Sigmoid colon (tissue), 7 donors: ENCODE measurements at regions of chr6 and their contacts with region 1.

Region 1: DNA sequence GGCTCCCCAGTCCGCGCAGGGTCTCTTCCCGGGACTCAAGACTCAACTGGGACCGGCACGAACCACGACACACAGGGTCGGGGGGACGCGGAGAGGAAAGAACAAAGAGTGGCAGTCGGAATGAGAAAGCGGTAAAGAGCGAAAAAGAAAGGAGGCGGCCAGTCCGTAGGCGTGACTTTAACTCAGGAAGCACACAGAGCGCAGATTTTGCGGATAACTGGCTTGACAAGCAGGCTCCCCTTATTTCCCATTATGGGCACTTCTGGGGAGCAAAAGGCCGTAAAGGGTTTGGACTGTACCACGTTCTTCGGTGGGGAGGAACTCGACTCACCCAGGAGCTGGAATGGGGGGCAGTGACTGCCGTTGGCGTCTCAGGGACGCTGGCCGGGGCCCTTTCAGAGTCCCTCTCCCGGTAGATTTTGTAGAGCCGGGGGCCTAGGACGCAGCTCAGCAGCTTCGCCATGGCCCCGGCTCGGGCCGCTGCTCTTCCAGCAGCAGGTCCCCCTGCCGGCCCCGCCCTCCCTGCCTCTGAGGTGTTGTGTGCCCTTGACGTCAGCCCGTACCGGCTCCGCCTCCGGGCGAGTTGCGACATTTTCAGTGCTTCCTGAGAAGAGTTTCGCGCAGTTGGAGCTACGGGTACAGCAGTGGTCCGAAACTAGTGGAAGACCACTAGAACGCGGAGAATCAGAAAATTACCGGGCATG is at the start of gene ABHD16A:
- DNase-seq: peak; percentile 100
- H3K4me3 ChIP-seq: peak within 1 kb of the TSS; percentile 66 to 92 (median 80)
- H3K27ac ChIP-seq: peak within 1 kb of the TSS; percentile 94 to 99 (median 97)
- H3K4me1 ChIP-seq: peaks cover 0 to 36% (median 22%) of the 10 kb centered on the region in 4 donors
- H3K27me3 ChIP-seq: no peaks in the 10 kb centered on the region
- CTCF ChIP-seq: no peak
- EP300 ChIP-seq: peak in 2 of 4 donors; percentile 66 to 82
- POLR2A ChIP-seq: peak; percentile 99
- total RNA-seq, gene ABHD16A: 37.8 to 63.4 (median 51.6) TPM

Region 2: GRCh38 chr6:31729515-31729978 is 26.6 kb after region 1 on chr6:
- intact Hi-C with region 1: loop called (anchors 1 kb)
- DNase-seq: peak; percentile 97
- H3K4me3 ChIP-seq: peak overlapping the region; percentile 78 to 95 (median 84)
- H3K27ac ChIP-seq: peak overlapping the region; percentile 96 to 99 (median 98)
- H3K4me1 ChIP-seq: peaks cover 0 to 39% (median 33%) of the 10 kb centered on the region in 4 donors
- H3K27me3 ChIP-seq: no peaks in the 10 kb centered on the region
- CTCF ChIP-seq: peak in 1 of 4 experiments; percentile 25
- EP300 ChIP-seq: no peak
- POLR2A ChIP-seq: peak; percentile 23 to 29

Region 3: DNA sequence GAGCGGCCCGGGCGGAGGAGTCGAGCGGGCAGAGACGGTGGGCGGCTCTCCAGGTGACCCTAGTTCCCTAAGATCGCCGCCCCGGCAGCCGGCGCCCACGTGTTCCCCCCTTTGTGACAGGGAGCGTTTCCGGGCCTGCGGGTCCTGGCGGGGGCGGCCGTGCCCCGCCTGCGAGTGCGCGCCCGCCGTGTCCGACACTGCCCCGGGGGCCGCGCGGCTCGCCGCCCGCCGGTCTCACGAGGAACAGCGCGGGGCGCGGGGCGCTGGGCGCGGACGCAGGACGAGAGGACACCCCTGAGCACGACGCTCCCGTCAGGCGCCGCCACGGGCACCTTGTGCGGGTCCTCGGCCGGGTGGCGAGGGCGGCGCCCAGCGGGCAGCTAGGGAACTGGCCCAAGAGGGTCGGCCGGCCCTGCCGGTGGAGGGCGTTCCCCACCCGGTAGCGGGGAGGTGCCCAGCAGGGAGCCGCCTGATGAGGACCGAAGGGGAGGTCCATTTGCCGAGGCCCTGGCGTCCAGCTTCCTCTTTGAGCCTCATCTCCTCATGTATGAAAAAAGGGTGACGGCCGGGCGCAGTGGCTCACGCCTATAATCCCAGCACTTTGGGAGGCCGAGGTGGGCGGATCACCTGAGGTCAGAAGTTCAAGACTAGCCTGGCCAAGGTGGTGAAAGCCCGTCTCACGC is 92.8 kb after region 1 on chr6 and contains the start of gene VARS1:
- intact Hi-C with region 1: loop called (anchors 5 kb)
- DNase-seq: peak; percentile 96
- H3K4me3 ChIP-seq: peak within 1 kb of the TSS; percentile 80 to 97 (median 90)
- H3K27ac ChIP-seq: peak within 1 kb of the TSS; percentile 90 to 94 (median 91)
- H3K4me1 ChIP-seq: peaks cover 0 to 22% (median 17%) of the 10 kb centered on the region in 4 donors
- H3K27me3 ChIP-seq: no peaks in the 10 kb centered on the region
- CTCF ChIP-seq: peak; percentile 52 to 72 (median 72)
- EP300 ChIP-seq: peak in 1 of 4 donors; percentile 3
- POLR2A ChIP-seq: peak in 1 of 2 donors; percentile 35
- total RNA-seq, gene VARS1: 16.0 to 36.2 (median 27.7) TPM